ENCODE measurements at regions of chr12 and their contacts with region 1.

Region 1: DNA sequence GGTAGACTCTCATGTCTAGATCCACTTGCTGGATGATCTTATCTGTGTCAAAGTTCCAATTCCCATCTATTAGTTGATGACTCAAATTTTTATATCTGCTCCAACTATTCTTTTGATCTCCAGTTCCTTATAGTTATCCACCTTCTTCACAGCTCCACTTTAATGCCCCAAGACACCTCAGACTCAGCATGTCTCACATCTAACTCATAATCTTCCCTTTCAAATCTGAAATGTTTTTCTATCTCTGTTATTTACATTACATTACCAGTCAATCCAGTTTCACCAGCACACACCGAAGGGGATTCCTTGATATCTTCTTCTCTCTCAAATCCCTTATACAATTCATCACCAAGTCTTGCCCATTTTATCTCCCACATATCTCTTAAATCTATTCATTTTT is 3.6 kb upstream of the METAP2 start:
- DNase-seq: no peak
- ATAC-seq: no peak
- H3K4me3 ChIP-seq: no peak overlapping the region
- H3K27ac ChIP-seq: no peak overlapping the region
- H3K4me1 ChIP-seq: peaks cover 2% of the 10 kb centered on the region; the same call in 1 of the 2 replicates
- H3K27me3 ChIP-seq: no peaks in the 10 kb centered on the region
- CTCF ChIP-seq: no peak

Region 2: GRCh38 chr12:95385246-95386035 is 84.9 kb before region 1 on chr12:
- CTCF ChIA-PET with region 1: interaction called, 12 read pairs
- POLR2A ChIA-PET with region 1: no interaction called
- in situ Hi-C with region 1: no loop called
- intact Hi-C with region 1: no loop called
- DNase-seq: no peak
- ATAC-seq: no peak
- H3K4me3 ChIP-seq: no peak overlapping the region
- H3K27ac ChIP-seq: no peak overlapping the region
- H3K4me1 ChIP-seq: no peaks in the 10 kb centered on the region
- H3K27me3 ChIP-seq: peaks cover 3% of the 10 kb centered on the region; the same call in 1 of the 2 replicates
- CTCF ChIP-seq: no peak

Region 3: DNA sequence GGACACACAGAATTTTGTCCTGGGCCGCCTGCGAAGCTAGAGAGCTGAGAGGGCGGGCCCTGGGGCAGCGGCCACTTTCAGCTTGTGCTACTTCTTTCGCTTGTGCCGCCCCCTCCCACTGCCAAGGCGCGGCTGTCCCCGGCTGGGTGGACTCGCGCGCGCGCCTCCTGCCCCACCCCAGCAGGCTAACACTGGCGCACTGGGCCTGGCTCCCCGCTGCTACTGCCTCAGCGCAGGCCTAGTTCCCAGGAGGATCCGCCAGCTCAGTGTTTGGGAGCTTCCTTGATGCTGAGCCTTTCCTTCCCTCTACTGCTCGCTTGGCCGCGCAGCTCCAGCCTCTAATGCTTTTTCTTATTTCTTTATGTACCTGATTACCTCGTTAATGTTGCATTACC is 23.8 kb before region 1 on chr12:
- CTCF ChIA-PET with region 1: no interaction called
- POLR2A ChIA-PET with region 1: no interaction called
- in situ Hi-C with region 1: no loop called
- intact Hi-C with region 1: no loop called
- DNase-seq: no peak
- ATAC-seq: no peak
- H3K4me3 ChIP-seq: no peak overlapping the region
- H3K27ac ChIP-seq: no peak overlapping the region
- H3K4me1 ChIP-seq: no peaks in the 10 kb centered on the region
- H3K27me3 ChIP-seq: no peaks in the 10 kb centered on the region
- CTCF ChIP-seq: no peak

Region 4: DNA sequence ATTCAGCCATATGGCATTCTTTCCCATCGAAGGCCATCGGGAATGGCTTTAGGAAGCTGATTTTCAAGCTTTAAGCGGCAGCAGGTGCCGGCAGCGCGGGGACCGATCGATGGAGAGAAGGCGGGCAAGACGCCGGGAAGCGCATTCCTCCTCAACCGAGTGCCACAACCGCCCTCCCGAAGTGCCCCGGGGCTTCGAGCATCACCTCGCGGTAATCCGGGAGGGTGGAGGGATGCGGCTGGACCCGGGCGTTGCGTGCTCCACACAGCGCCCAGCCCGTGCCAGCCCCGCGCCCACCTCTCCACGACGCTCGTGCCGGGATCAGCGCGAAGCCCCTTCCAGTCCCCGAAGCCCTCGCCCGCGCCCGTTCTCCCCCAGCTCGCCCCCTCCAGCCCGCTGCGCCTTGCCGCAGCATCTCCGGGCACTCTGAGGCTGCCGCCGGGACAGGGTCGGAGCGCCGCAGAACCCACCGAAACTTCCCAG is 77.8 kb after region 1 on chr12:
- CTCF ChIA-PET with region 1: no interaction called
- POLR2A ChIA-PET with region 1: no interaction called
- in situ Hi-C with region 1: no loop called
- intact Hi-C with region 1: no loop called
- DNase-seq: no peak
- ATAC-seq: 0 out of 2 replicates have a peak, but pooled peaks have one; percentile 48
- H3K4me3 ChIP-seq: peak overlapping the region; percentile 28 to 31
- H3K27ac ChIP-seq: no peak overlapping the region
- H3K4me1 ChIP-seq: no peaks in the 10 kb centered on the region
- H3K27me3 ChIP-seq: peaks cover 12% of the 10 kb centered on the region; the same call in 1 of the 2 replicates
- CTCF ChIP-seq: no peak